Activated B cell treated with CpG ODN at 0.5 μM for 24 hours (primary cell): ENCODE measurements at regions of chr9 and their contacts with region 1.

Region 1: GRCh38 chr9:80134487-80134886 is 562.7 kb downstream of the TLE4 start:
- DNase-seq: no peak
- ATAC-seq: peak; percentile 98
- H3K4me3 Mint-ChIP-seq: peak overlapping the region; percentile 61
- H3K27ac Mint-ChIP-seq: peak overlapping the region; percentile 79
- H3K4me1 Mint-ChIP-seq: peaks cover 42% of the 10 kb centered on the region
- H3K27me3 Mint-ChIP-seq: no peaks in the 10 kb centered on the region
- CTCF ChIP-seq: no peak

Region 2: GRCh38 chr9:79694676-79695400 is 439.6 kb before region 1 on chr9:
- CTCF ChIA-PET with region 1: no interaction called
- POLR2A ChIA-PET with region 1: no interaction called
- intact Hi-C with region 1: no loop called
- DNase-seq: no peak
- ATAC-seq: no peak
- H3K4me3 Mint-ChIP-seq: no peak overlapping the region
- H3K27ac Mint-ChIP-seq: no peak overlapping the region
- H3K4me1 Mint-ChIP-seq: peaks cover 22% of the 10 kb centered on the region
- H3K27me3 Mint-ChIP-seq: no peaks in the 10 kb centered on the region
- CTCF ChIP-seq: no peak

Region 3: DNA sequence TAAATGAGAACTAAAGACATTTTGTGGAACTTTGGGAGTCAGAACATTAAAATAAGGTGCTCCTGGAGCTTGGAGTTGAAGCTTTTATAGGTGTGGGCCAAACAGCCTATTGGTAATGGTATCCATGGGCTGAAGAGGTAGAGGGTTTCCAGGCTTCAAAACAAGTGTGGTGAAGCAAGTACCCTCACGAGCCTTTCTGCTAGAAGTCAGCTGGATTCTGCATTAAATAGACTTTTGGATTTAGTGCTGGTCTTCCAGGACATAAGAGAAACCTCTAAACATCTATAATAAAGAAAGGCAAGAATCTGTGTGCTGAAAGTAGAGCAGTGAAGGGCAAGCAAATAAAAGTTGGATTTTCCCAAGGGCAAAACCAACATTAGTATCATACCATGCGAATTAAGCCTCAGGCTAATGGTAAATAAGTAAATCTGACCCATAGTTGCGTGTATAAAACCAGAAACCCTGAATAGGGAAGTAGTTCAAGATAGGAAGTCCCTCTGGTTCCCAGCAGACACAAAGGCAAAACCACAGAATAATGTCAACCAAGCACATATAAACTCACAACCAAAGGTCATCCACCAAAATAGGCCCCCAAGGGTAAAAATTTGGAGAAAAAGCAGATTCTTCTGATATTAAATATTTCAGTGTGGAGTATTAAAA is 256.4 kb before region 1 on chr9:
- CTCF ChIA-PET with region 1: no interaction called
- POLR2A ChIA-PET with region 1: no interaction called
- intact Hi-C with region 1: loop called (anchors 2 kb)
- DNase-seq: no peak
- ATAC-seq: peak; percentile 82
- H3K4me3 Mint-ChIP-seq: peak overlapping the region; percentile 13
- H3K27ac Mint-ChIP-seq: peak overlapping the region; percentile 13
- H3K4me1 Mint-ChIP-seq: peaks cover 51% of the 10 kb centered on the region
- H3K27me3 Mint-ChIP-seq: no peaks in the 10 kb centered on the region
- CTCF ChIP-seq: no peak

Region 4: GRCh38 chr9:80074439-80074838 is 60.0 kb before region 1 on chr9:
- CTCF ChIA-PET with region 1: no interaction called
- POLR2A ChIA-PET with region 1: no interaction called
- intact Hi-C with region 1: loop called (anchors 2 kb)
- DNase-seq: no peak
- ATAC-seq: no peak
- H3K4me3 Mint-ChIP-seq: no peak overlapping the region
- H3K27ac Mint-ChIP-seq: no peak overlapping the region
- H3K4me1 Mint-ChIP-seq: peaks cover 33% of the 10 kb centered on the region
- H3K27me3 Mint-ChIP-seq: no peaks in the 10 kb centered on the region
- CTCF ChIP-seq: no peak

Region 5: DNA sequence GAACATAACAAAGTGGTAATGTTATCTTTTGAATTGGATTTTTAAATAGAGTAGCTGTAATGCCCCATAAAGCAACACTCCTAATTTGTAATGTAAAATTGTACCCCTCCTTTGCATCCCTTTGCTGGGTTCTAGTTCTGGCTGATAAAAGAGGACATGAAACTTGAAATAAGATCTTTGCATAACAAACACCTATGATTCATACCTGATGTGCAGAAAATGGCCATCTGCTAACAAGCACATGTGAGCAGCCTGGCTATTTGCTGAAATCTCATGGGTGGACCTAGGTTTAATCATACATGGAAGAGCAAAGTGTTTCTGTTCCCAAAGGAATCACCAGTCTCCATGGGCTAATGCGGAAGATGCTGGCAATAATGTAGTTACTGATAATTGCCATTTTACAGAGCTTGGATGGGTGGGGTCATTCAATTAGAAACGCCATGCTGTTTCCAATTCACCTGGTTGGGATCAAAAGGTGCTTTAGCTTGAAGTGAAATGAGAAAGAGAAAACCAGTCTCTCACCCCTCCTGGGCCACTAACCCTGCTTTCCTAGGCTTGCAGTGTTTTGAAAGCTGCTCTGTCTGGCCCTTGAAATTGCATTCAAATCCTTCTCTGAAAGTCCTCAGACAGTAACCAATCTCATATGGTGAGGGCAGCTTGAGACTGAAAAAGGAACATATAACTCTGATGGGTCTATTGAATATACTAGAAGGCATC is 22.4 kb after region 1 on chr9:
- CTCF ChIA-PET with region 1: no interaction called
- POLR2A ChIA-PET with region 1: interaction called, 4 read pairs
- intact Hi-C with region 1: loop called (anchors 1 kb)
- DNase-seq: no peak
- ATAC-seq: peak; percentile 88
- H3K4me3 Mint-ChIP-seq: no peak overlapping the region
- H3K27ac Mint-ChIP-seq: peak overlapping the region; percentile 73
- H3K4me1 Mint-ChIP-seq: peaks cover 51% of the 10 kb centered on the region
- H3K27me3 Mint-ChIP-seq: no peaks in the 10 kb centered on the region
- CTCF ChIP-seq: no peak

Region 6: GRCh38 chr9:80163889-80164288 is 29.4 kb after region 1 on chr9:
- CTCF ChIA-PET with region 1: no interaction called
- POLR2A ChIA-PET with region 1: no interaction called
- intact Hi-C with region 1: loop called (anchors 2 kb)
- DNase-seq: no peak
- ATAC-seq: peak; percentile 96
- H3K4me3 Mint-ChIP-seq: no peak overlapping the region
- H3K27ac Mint-ChIP-seq: no peak overlapping the region
- H3K4me1 Mint-ChIP-seq: peaks cover 20% of the 10 kb centered on the region
- H3K27me3 Mint-ChIP-seq: no peaks in the 10 kb centered on the region
- CTCF ChIP-seq: no peak

Region 7: DNA sequence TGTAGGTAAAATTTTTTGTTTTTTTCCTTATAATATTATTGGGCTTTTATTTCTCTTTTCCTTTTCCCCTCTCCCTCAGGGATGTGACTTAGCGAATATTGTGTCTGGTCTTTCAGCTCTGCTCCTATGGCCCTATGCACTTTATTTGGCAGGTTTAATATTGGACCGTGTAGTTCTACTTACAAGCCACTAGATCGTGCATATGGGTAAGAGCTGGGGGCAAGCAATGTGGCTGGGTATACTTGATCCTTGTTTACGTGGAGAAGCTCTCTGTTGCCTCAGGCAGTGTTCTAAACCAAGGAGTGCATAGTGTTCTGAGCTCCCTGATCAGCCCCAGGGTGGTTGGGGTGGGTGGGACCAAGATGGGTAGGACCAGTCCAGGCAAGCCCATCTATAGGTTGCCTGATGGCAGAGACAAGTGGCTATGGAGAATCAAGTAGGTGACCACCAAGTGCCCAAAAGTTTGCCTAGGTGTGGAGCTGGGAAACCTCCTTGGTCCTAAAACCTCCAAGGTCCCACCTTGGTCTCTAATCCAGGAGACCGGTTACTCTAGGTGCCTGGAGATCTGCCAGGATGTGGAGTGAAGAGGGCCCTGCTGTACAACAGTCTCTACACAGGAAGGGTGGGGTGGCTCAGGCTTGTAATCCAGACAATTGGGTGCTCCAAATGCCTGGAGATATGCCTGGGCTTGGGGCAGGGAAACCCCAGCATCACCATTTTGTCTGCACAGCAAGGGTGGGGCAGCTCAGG is 96.9 kb after region 1 on chr9:
- CTCF ChIA-PET with region 1: no interaction called
- POLR2A ChIA-PET with region 1: no interaction called
- intact Hi-C with region 1: loop called (anchors 5 kb)
- DNase-seq: no peak
- ATAC-seq: no peak
- H3K4me3 Mint-ChIP-seq: peak overlapping the region; percentile 68
- H3K27ac Mint-ChIP-seq: peak overlapping the region; percentile 93
- H3K4me1 Mint-ChIP-seq: peaks cover 53% of the 10 kb centered on the region
- H3K27me3 Mint-ChIP-seq: no peaks in the 10 kb centered on the region
- CTCF ChIP-seq: no peak

Region 8: DNA sequence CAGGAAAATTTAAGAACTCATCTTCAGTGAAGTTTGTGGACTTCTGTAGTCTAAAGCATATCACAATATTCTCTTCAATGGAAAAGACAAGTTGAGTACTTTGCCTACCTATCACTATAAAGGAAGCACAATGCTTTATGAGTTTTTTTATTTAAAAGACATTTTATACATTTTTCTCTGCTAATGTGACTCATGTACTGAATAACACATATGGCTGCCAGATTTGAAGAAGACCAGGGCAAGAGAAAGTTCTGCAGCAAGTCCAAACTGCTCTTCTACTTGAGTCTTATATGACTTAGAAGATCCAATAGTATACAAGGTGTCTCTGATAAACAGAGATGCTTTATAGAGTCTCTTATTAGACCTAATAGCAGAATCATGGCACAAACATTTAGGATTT is 415.7 kb after region 1 on chr9:
- CTCF ChIA-PET with region 1: no interaction called
- POLR2A ChIA-PET with region 1: no interaction called
- intact Hi-C with region 1: no loop called
- DNase-seq: no peak
- ATAC-seq: no peak
- H3K4me3 Mint-ChIP-seq: no peak overlapping the region
- H3K27ac Mint-ChIP-seq: no peak overlapping the region
- H3K4me1 Mint-ChIP-seq: no peaks in the 10 kb centered on the region
- H3K27me3 Mint-ChIP-seq: no peaks in the 10 kb centered on the region
- CTCF ChIP-seq: no peak